PC-9 (cell line): ENCODE measurements at regions of chr5 and their contacts with region 1.

Region 1: DNA sequence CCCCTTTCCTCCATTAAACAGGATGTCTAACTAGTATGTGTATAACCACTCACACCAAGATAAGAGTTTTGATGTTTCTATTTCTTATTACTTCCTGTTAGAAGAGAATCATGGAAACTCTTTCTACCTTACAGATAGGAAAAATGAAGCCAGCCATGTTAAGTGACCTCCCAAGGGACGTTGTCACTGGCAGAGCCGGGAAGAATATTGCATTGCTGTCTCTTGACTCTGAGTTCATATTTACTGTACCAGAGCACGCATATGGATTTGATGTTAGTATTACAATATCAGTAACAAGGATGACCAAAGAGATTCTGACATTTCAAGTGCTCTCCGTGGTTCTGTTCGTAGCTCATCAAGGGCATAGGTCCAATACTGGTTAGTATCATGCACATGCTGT is 12.5 kb upstream of the C5orf63 start:
- DNase-seq: no peak
- H3K4me3 ChIP-seq: no peak overlapping the region
- H3K27ac ChIP-seq: no peak overlapping the region
- H3K4me1 ChIP-seq: peaks cover 9% of the 10 kb centered on the region
- H3K27me3 ChIP-seq: no peaks in the 10 kb centered on the region
- CTCF ChIP-seq: no peak

Region 2: DNA sequence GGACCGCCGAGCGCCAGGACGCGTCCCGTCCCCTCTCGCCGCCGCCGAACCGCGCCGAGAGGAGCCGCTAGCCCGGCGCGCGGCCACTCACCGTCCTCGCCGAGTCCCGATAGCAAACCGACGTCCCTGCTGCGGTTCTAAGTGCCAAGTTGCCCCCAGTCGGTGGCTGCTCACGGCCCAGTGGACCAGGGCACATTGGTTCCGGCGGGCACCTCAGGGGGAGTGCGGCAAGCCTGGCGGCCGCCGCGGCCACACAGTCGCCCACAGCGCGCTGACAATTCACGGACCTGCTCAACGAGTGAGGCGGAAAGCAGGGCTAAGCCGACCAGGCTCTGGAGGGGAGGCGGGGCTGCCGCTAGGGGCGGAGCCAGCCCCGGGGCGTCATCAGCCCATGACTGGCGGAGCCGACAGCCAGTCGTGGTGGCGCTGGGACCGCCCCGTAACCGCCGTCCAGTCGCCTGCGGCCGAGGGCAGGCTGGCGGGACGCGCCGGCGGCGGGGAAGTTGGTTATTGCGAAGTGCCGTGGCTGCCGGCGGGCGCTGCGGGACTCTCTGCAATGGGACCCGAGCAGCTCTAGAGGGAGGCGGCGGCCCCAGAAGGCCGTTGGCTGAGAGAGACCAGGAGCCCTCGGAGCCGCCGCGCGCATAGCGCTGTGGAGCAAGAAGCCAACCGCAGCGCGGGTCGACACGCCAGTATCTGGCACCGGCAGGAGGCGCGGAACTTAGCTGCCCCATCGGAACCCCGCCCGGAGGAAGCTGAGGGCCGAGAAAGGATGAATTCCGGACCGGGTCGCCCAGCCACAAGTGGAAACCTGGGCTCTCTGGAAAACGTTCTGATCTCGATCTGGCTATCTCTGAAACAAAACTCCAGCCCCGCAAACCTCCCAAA is 55.3 kb before region 1 on chr5 and contains the start of gene MARCHF3:
- CTCF ChIA-PET with region 1: no interaction called
- POLR2A ChIA-PET with region 1: no interaction called
- intact Hi-C with region 1: no loop called
- DNase-seq: peak; percentile 87 to 96
- H3K4me3 ChIP-seq: peak within 1 kb of the TSS; percentile 81
- H3K27ac ChIP-seq: no peak within 1 kb of the TSS
- H3K4me1 ChIP-seq: peaks cover 4% of the 10 kb centered on the region; the same call in 1 of the 2 replicates
- H3K27me3 ChIP-seq: no peaks in the 10 kb centered on the region
- CTCF ChIP-seq: peak; percentile 16; the same call in 1 of the 2 replicates
- total RNA-seq, gene MARCHF3: 0.35 and 0.75 TPM in 2 replicates

Region 3: DNA sequence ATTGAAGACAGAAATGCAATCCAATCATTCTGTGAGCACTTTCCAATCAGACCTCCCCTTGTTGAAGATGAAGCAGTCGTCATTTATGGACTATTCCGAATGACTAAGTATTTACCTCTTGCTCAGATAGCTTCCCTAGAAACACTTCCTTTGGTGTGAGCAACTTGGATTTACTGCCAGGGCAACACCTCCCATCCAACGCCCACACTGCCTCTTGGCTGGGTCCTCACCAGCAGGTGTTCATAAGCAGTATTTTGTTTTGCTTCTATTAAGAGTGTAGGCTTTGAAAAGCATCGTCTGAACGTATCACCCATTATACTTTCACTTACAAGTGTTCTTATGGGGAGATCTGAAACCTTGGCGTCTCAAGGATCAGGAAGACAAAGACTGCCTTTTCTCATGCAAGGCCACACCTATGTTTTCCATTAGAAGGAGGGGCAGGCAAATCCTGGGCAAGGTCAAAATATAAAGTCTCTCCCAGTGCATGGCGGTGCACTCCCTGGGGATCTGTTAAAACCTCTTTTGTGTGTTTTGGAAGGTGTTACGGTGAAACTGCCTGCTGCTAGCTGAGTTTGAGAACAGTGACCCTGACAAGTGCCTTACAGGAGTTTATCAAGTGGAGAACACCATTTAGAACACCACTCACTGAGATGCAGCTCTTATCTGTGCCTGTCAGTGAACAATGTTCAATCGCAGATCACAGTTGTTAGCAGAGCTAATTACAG is 44.8 kb before region 1 on chr5:
- CTCF ChIA-PET with region 1: no interaction called
- POLR2A ChIA-PET with region 1: interaction called, 10 read pairs
- intact Hi-C with region 1: no loop called
- DNase-seq: no peak
- H3K4me3 ChIP-seq: no peak overlapping the region
- H3K27ac ChIP-seq: no peak overlapping the region
- H3K4me1 ChIP-seq: no peaks in the 10 kb centered on the region
- H3K27me3 ChIP-seq: no peaks in the 10 kb centered on the region
- CTCF ChIP-seq: no peak